Endothelial cell of umbilical vein (primary cell): ENCODE measurements at regions of chr11 and their contacts with region 1.

Region 1: DNA sequence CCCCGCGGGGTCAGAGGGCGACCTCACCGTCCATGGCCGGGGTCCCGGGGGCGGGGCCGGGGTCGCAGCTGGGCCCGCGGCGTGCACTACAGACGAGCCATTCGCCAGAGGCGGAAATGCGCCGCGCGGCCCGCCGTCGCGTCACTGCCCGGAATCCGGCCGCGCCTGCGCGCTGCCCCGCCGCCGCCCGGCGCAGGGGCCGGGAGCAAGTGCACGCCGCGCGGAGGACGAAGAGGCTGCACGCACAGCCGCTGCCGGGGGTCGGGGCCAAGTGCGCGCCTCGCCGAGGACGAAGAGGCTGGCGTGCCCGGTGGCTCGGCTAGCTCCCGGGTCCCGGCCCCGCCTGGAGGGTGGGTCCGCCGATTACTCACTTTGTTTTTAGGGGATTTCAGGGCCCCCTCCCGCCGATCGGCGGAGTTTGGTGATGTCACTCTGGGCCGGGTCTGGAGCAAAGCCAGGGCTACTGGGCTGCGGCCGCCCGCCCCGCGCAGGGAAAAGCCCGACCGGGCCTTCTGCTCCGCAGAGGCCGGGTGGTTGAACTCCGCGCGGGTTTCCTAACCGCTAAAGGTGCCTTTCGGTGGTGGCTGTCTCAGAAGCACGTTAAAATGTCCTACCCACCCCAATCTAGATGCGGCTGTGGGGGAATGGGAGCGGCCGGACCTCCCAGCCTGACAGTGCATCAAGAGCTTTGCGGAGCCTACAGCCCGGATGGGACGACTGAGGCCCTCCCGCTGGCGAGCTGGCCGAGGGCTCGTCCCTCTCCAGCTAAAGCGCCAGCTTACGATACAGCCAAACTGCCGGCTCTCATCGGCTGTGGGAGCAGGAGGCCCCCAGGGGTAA is at the start of gene RELA:
- DNase-seq: peak; percentile 92
- H3K4me3 ChIP-seq: peak within 1 kb of the TSS; percentile 34 to 94 (median 77)
- H3K27ac ChIP-seq: peak within 1 kb of the TSS; percentile 91
- H3K4me1 ChIP-seq: peaks cover 18% of the 10 kb centered on the region
- H3K27me3 ChIP-seq: no peaks in the 10 kb centered on the region
- CTCF ChIP-seq: no peak
- POLR2A ChIP-seq: peak; percentile 87
- total RNA-seq, gene RELA: 105 and 106 TPM in 2 replicates

Region 2: GRCh38 chr11:65416060-65416824 is 246.8 kb before region 1 on chr11:
- CTCF ChIA-PET with region 1: no interaction called
- POLR2A ChIA-PET with region 1: no interaction called
- dilution Hi-C with region 1: no loop called
- intact Hi-C with region 1: no loop called
- DNase-seq: peak; percentile 86
- H3K4me3 ChIP-seq: no peak overlapping the region
- H3K27ac ChIP-seq: no peak overlapping the region
- H3K4me1 ChIP-seq: peaks cover 48% of the 10 kb centered on the region
- H3K27me3 ChIP-seq: no peaks in the 10 kb centered on the region
- CTCF ChIP-seq: peak; percentile 97 to 98
- POLR2A ChIP-seq: peak; percentile 47

Region 3: GRCh38 chr11:65652511-65653231 is 10.3 kb before region 1 on chr11:
- CTCF ChIA-PET with region 1: interaction called, 14 read pairs
- POLR2A ChIA-PET with region 1: interaction called, 19 read pairs
- dilution Hi-C with region 1: no loop called
- intact Hi-C with region 1: loop called (anchors 1 kb)
- DNase-seq: peak; percentile 96
- H3K4me3 ChIP-seq: peak overlapping the region in 2 of 3 experiments; percentile 25 to 49
- H3K27ac ChIP-seq: peak overlapping the region; percentile 95
- H3K4me1 ChIP-seq: peaks cover 23% of the 10 kb centered on the region
- H3K27me3 ChIP-seq: no peaks in the 10 kb centered on the region
- CTCF ChIP-seq: no peak
- POLR2A ChIP-seq: peak; percentile 76